A673 (cell line): ENCODE measurements at regions of chr7 and their contacts with region 1.

Region 1: GRCh38 chr7:117338020-117338419 is 15.2 kb upstream of the WNT2 start:
- DNase-seq: no peak
- H3K4me3 ChIP-seq: no peak overlapping the region
- H3K27ac ChIP-seq: no peak overlapping the region
- H3K4me1 ChIP-seq: no peaks in the 10 kb centered on the region
- H3K27me3 ChIP-seq: no peaks in the 10 kb centered on the region
- CTCF ChIP-seq: no peak

Region 2: GRCh38 chr7:116970238-116970910 is 367.6 kb before region 1 on chr7:
- CTCF ChIA-PET with region 1: no interaction called
- POLR2A ChIA-PET with region 1: no interaction called
- intact Hi-C with region 1: no loop called
- DNase-seq: no peak
- H3K4me3 ChIP-seq: no peak overlapping the region
- H3K27ac ChIP-seq: no peak overlapping the region
- H3K4me1 ChIP-seq: peaks cover 13% of the 10 kb centered on the region
- H3K27me3 ChIP-seq: no peaks in the 10 kb centered on the region
- CTCF ChIP-seq: no peak

Region 3: DNA sequence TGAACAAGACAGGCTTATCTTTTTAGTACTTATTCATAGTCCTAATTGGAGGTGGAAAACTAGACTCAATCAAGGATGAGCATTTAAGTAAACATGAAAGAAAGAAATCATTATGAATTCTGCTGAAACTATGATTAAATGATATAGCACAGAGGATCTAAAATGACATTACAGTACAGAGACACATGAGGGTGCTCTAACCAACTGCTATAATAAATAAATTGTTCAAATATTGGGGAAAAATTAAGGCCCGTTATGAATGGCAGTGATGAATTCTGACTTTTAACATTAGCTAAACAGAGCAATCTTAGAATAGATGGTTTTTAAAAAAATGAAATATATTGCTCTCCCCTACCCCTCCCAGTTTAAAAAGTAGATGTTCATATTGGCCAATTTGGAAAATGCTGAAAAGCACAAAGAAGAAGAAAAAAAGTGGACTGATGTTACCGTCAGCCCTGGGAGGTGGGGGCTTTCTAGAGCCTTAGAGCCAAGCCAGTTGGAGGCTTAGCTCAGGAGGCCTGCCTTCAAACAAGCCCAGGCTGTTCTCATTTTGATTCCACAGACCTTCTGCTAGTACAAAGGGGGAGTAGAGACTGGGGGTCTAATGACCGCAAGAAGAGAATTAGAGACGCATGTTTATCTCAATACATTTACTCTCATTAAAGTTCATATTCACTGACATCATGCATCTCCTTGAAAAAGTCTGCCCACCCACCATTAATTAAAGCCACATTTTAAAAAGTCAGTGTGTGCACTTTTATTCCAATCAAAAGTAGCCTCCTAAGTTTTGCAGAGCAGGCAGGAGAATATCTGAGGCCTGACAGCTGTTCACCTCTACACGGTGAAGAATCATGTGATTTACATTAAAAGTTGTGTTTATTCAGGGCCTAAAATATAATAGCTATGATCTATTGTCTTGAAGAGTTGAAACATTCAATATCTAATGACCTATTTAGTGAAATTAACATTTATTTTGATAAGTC is 25.1 kb before region 1 on chr7:
- CTCF ChIA-PET with region 1: interaction called, 12 read pairs
- POLR2A ChIA-PET with region 1: no interaction called
- intact Hi-C with region 1: no loop called
- DNase-seq: no peak
- H3K4me3 ChIP-seq: no peak overlapping the region
- H3K27ac ChIP-seq: no peak overlapping the region
- H3K4me1 ChIP-seq: no peaks in the 10 kb centered on the region
- H3K27me3 ChIP-seq: peaks cover 6% of the 10 kb centered on the region
- CTCF ChIP-seq: peak; percentile 38; the same call in 1 of the 2 replicates

Region 4: GRCh38 chr7:117362294-117362888 is 24.4 kb after region 1 on chr7:
- CTCF ChIA-PET with region 1: no interaction called
- POLR2A ChIA-PET with region 1: no interaction called
- intact Hi-C with region 1: no loop called
- DNase-seq: no peak
- H3K4me3 ChIP-seq: no peak overlapping the region
- H3K27ac ChIP-seq: no peak overlapping the region
- H3K4me1 ChIP-seq: no peaks in the 10 kb centered on the region
- H3K27me3 ChIP-seq: peaks cover 18% of the 10 kb centered on the region
- CTCF ChIP-seq: no peak

Region 5: DNA sequence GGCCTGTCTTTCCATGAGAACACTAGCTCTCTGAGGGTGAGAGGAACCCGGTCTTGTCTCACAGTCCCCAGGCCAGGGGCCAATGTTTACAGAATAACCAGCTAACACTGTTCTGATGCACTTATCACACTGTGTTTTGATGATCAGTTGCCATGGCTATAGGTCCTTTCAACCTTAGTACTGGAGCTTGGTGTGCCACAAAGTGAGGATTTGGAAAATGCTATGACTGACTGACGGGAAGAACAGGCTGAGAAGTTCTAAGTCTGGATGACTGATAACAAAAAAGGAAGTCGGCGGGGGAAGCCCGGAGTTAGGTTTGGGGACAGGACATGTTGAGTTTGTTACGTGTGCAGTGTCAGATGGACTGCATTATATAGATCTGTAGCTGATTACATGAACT is 393.4 kb after region 1 on chr7:
- CTCF ChIA-PET with region 1: no interaction called
- POLR2A ChIA-PET with region 1: no interaction called
- intact Hi-C with region 1: no loop called
- DNase-seq: no peak
- H3K4me3 ChIP-seq: no peak overlapping the region
- H3K27ac ChIP-seq: no peak overlapping the region
- H3K4me1 ChIP-seq: peaks cover 28% of the 10 kb centered on the region
- H3K27me3 ChIP-seq: no peaks in the 10 kb centered on the region
- CTCF ChIP-seq: no peak